ENCODE measurements at regions of chr19 and their contacts with region 1.

Region 1: GRCh38 chr19:45770192-45771101 is 1.4 kb upstream of the SIX5 start:
- DNase-seq: peak; percentile 99
- H3K4me3 ChIP-seq: peak overlapping the region; percentile 53
- H3K27ac ChIP-seq: peak overlapping the region; percentile 86
- H3K4me1 ChIP-seq: peaks cover 13% of the 10 kb centered on the region
- H3K27me3 ChIP-seq: no peaks in the 10 kb centered on the region
- CTCF ChIP-seq: peak; percentile 96

Region 2: GRCh38 chr19:45798995-45799517 is 28.6 kb after region 1 on chr19:
- CTCF ChIA-PET with region 1: interaction called, 17 read pairs
- POLR2A ChIA-PET with region 1: no interaction called
- intact Hi-C with region 1: no loop called
- DNase-seq: peak; percentile 75
- H3K4me3 ChIP-seq: no peak overlapping the region
- H3K27ac ChIP-seq: no peak overlapping the region
- H3K4me1 ChIP-seq: peaks cover 4% of the 10 kb centered on the region
- H3K27me3 ChIP-seq: no peaks in the 10 kb centered on the region
- CTCF ChIP-seq: peak; percentile 83

Measured in A673 (cell line).